ENCODE measurements at regions of chr15 and their contacts with region 1.

Region 1: GRCh38 chr15:42409011-42409410 is 49.7 kb downstream of the CAPN3 start:
- DNase-seq: no peak
- ATAC-seq: peak; percentile 37
- H3K4me3 ChIP-seq: no peak overlapping the region
- H3K27ac ChIP-seq: no peak overlapping the region
- H3K4me1 ChIP-seq: peaks cover 35% of the 10 kb centered on the region
- H3K27me3 ChIP-seq: no peaks in the 10 kb centered on the region
- CTCF ChIP-seq: no peak
- EP300 ChIP-seq: no peak
- POLR2A ChIP-seq: no peak
- RAD21 ChIP-seq: no peak

Region 2: DNA sequence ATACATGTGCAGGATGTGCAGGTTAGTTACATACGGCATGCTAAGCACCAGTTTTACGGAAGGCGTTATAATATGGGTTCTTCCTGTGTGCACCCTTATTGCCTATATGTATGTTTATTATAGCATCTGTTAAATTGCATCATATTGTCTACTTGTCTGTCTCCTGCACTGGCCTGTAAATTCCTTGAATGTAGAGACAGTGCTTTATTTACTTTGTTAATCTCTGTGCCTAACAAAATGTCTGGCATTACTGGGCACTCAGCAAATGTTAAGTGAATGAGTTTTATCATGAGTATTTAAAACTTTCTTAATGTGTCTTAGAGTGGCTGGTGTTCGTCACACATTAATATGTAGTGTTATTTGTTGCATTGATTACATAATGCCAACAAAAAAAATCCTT is 725.1 kb before region 1 on chr15:
- CTCF ChIA-PET with region 1: no interaction called
- POLR2A ChIA-PET with region 1: no interaction called
- in situ Hi-C with region 1: no loop called
- intact Hi-C with region 1: no loop called
- DNase-seq: peak; percentile 18
- ATAC-seq: no peak
- H3K4me3 ChIP-seq: no peak overlapping the region
- H3K27ac ChIP-seq: no peak overlapping the region
- H3K4me1 ChIP-seq: peaks cover 33% of the 10 kb centered on the region
- H3K27me3 ChIP-seq: no peaks in the 10 kb centered on the region
- CTCF ChIP-seq: no peak
- EP300 ChIP-seq: no peak
- POLR2A ChIP-seq: no peak
- RAD21 ChIP-seq: no peak

Region 3: GRCh38 chr15:42392309-42393024 is 16.5 kb before region 1 on chr15:
- CTCF ChIA-PET with region 1: no interaction called
- POLR2A ChIA-PET with region 1: interaction called, 10 read pairs
- in situ Hi-C with region 1: no loop called
- intact Hi-C with region 1: no loop called
- DNase-seq: peak; percentile 98
- ATAC-seq: peak; percentile 99
- H3K4me3 ChIP-seq: peak overlapping the region; percentile 48 to 74 (median 50); a peak in 5 of 6 replicates
- H3K27ac ChIP-seq: peak overlapping the region; percentile 100
- H3K4me1 ChIP-seq: peaks cover 59% of the 10 kb centered on the region
- H3K27me3 ChIP-seq: no peaks in the 10 kb centered on the region
- CTCF ChIP-seq: peak; percentile 38; the same call in 1 of the 2 replicates
- EP300 ChIP-seq: peak; percentile 62 to 72; a peak in 2 of 4 replicates
- POLR2A ChIP-seq: peak; percentile 80 to 95
- RAD21 ChIP-seq: peak; percentile 32; the same call in 1 of the 2 replicates